ENCODE measurements at regions of chr14 and their contacts with region 1.

Region 1: DNA sequence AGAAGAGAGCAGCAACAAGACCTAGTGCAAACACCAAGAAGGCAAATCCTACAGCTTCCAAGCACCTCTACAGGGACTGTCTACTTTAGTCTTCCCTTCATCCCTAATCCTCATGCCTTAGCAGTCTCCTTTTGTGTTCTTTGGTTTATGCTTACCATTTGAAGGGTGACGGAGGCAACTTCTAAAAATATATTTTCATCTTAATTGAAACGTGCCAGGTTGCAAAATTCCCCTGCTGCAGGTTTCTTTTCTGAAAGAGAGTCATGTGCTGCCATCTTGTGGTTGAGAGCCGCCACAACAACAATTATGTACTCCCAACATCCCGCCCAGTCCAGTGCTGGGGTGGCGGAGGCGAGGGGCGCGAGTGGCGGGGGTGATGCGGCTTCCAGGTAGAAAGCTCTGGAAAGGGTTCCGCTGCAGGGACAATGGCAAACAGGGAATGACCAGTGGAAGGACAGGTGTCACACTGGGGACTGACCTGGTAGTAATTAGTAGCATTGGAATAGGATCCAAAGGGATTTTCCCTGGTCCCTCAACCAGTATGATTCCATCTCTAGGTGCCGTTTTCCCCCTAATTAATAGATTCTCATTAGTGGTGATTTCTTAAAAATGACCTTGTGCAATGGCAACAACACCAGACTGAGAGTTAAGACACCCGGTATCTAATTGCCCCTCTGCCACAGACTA is 80.3 kb upstream of the GNG2 start:
- DNase-seq: peak; percentile 34 to 74 (median 64)
- ATAC-seq: peak; percentile 84
- H3K4me3 ChIP-seq: no peak overlapping the region
- H3K4me3 Mint-ChIP-seq: peak overlapping the region; percentile 5 to 76 (median 53)
- H3K27ac ChIP-seq: no peak overlapping the region
- H3K27ac Mint-ChIP-seq: peak overlapping the region in 6 of 9 donors; percentile 35 to 89 (median 46)
- H3K4me1 ChIP-seq: peaks cover 5 to 15% of the 10 kb centered on the region in 2 donors
- H3K4me1 Mint-ChIP-seq: peaks cover 18 to 34% (median 26%) of the 10 kb centered on the region in 7 donors
- H3K27me3 ChIP-seq: no peaks in the 10 kb centered on the region
- H3K27me3 Mint-ChIP-seq: peaks cover 0 to 48% (median 5%) of the 10 kb centered on the region in 5 donors

Region 2: DNA sequence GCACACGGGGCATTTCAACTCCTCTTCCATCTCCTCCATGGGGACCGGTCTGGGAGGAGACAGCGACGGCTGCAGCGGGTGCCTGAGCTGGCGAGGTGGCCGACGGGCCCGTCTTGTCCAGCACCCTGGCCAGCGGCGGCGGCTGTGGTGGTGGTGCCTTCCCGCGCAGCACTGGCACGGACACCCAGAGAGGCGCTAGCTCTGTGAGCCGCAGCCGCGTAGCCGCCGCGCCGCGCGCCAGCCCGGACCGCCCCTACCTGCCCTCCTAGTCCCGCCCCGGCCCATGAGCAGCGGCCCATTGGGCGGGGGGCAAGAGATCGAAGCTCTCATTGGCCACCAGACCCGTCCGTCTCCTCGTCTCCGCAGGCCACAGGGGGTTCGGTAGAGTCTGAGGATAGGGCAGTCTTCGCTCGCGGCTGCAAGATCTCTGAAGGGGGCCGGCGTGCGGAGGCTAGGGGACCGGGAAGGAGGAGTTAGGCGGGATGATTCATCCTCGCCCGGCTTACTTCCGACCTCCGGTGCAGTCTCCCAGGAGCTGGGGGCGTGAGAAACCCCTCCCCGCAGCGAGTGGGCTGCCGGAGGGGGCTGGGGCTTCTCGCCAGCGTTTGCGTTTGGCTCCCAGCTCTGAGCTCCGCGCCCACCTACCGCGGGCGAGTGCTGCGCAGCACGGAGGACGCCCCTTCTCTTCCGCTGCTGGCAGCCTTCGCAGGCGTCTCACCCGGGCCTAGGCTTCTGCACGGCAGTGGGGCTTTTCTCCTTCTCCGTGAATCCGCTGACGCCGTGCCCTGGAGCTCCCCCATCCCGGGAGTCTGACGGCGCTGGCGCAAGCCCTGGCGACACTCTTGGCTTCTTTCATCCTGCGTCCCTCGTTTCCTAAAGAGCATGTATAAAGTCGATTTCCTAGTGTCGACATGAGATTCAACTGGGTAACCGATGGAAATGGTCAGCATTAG is 685.0 kb before region 1 on chr14 and contains the start of gene TRIM9:
- CTCF ChIA-PET with region 1: interaction called, 3 read pairs
- POLR2A ChIA-PET with region 1: interaction called, 3 read pairs
- intact Hi-C with region 1: loop called (anchors 5 to 10 kb)
- DNase-seq: peak; percentile 77 to 93 (median 91)
- ATAC-seq: peak; percentile 96
- H3K4me3 ChIP-seq: peak within 1 kb of the TSS; percentile 83
- H3K4me3 Mint-ChIP-seq: peak within 1 kb of the TSS; percentile 89 to 98 (median 95)
- H3K27ac ChIP-seq: peak within 1 kb of the TSS; percentile 58
- H3K27ac Mint-ChIP-seq: peak within 1 kb of the TSS; percentile 9 to 93 (median 87)
- H3K4me1 ChIP-seq: peaks cover 3 to 8% of the 10 kb centered on the region in 2 donors
- H3K4me1 Mint-ChIP-seq: peaks cover 4 to 18% (median 9%) of the 10 kb centered on the region in 7 donors
- H3K27me3 ChIP-seq: peaks cover 0 to 3% of the 10 kb centered on the region in 2 donors
- H3K27me3 Mint-ChIP-seq: peaks cover 12 to 70% (median 17%) of the 10 kb centered on the region in 5 donors
- total RNA-seq, gene TRIM9: 0.27 to 1.7 (median 0.39) TPM

Region 3: DNA sequence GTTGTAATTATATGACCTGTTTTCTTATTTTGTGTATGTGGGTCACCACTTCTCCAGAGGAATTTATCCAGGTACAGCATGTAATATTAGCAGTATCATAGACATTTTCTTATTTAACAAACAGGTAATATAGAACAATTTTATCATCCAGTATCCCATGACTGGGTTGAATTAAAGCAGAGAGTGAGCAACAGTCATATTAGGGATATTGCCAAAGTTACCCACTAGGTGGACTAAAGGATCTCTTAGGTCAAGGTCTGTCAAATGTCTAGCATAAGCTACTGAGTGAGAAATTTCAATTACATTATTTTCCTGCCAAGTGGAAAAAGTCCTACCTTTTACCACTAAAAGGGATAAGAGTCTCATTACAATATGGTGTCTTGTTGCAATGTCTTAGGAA is 623.1 kb before region 1 on chr14:
- CTCF ChIA-PET with region 1: no interaction called
- POLR2A ChIA-PET with region 1: no interaction called
- intact Hi-C with region 1: loop called (anchors 5 kb)
- DNase-seq: no peak
- ATAC-seq: no peak
- H3K4me3 ChIP-seq: no peak overlapping the region
- H3K4me3 Mint-ChIP-seq: no peak overlapping the region
- H3K27ac ChIP-seq: no peak overlapping the region
- H3K27ac Mint-ChIP-seq: no peak overlapping the region
- H3K4me1 ChIP-seq: no peaks in the 10 kb centered on the region
- H3K4me1 Mint-ChIP-seq: peaks cover 0 to 3% (median 0%) of the 10 kb centered on the region in 7 donors
- H3K27me3 ChIP-seq: no peaks in the 10 kb centered on the region
- H3K27me3 Mint-ChIP-seq: peaks cover 0 to 3% (median 0%) of the 10 kb centered on the region in 5 donors

Region 4: GRCh38 chr14:51283402-51284085 is 496.6 kb before region 1 on chr14:
- CTCF ChIA-PET with region 1: interaction called, 33 read pairs
- POLR2A ChIA-PET with region 1: no interaction called
- intact Hi-C with region 1: loop called (anchors 1 kb)
- DNase-seq: peak in 5 of 9 donors; percentile 25 to 47 (median 32)
- ATAC-seq: peak; percentile 73
- H3K4me3 ChIP-seq: no peak overlapping the region
- H3K4me3 Mint-ChIP-seq: no peak overlapping the region
- H3K27ac ChIP-seq: no peak overlapping the region
- H3K27ac Mint-ChIP-seq: no peak overlapping the region
- H3K4me1 ChIP-seq: no peaks in the 10 kb centered on the region
- H3K4me1 Mint-ChIP-seq: peaks cover 0 to 2% (median 0%) of the 10 kb centered on the region in 7 donors
- H3K27me3 ChIP-seq: no peaks in the 10 kb centered on the region
- H3K27me3 Mint-ChIP-seq: no peaks in the 10 kb centered on the region

Region 5: GRCh38 chr14:51369814-51370213 is 410.3 kb before region 1 on chr14:
- CTCF ChIA-PET with region 1: no interaction called
- POLR2A ChIA-PET with region 1: no interaction called
- intact Hi-C with region 1: loop called (anchors 1 to 2 kb)
- DNase-seq: peak in 4 of 9 donors; percentile 1 to 14 (median 8)
- ATAC-seq: no peak
- H3K4me3 ChIP-seq: no peak overlapping the region
- H3K4me3 Mint-ChIP-seq: no peak overlapping the region
- H3K27ac ChIP-seq: no peak overlapping the region
- H3K27ac Mint-ChIP-seq: no peak overlapping the region
- H3K4me1 ChIP-seq: no peaks in the 10 kb centered on the region
- H3K4me1 Mint-ChIP-seq: no peaks in the 10 kb centered on the region
- H3K27me3 ChIP-seq: no peaks in the 10 kb centered on the region
- H3K27me3 Mint-ChIP-seq: peaks cover 4 to 14% (median 9%) of the 10 kb centered on the region in 5 donors

Region 6: GRCh38 chr14:51554953-51555352 is 225.2 kb before region 1 on chr14:
- CTCF ChIA-PET with region 1: interaction called, 4 read pairs
- POLR2A ChIA-PET with region 1: no interaction called
- intact Hi-C with region 1: loop called (anchors 1 to 10 kb)
- DNase-seq: no peak
- ATAC-seq: no peak
- H3K4me3 ChIP-seq: no peak overlapping the region
- H3K4me3 Mint-ChIP-seq: no peak overlapping the region
- H3K27ac ChIP-seq: no peak overlapping the region
- H3K27ac Mint-ChIP-seq: no peak overlapping the region
- H3K4me1 ChIP-seq: no peaks in the 10 kb centered on the region
- H3K4me1 Mint-ChIP-seq: no peaks in the 10 kb centered on the region
- H3K27me3 ChIP-seq: no peaks in the 10 kb centered on the region
- H3K27me3 Mint-ChIP-seq: peaks cover 11 to 24% (median 12%) of the 10 kb centered on the region in 5 donors

Region 7: GRCh38 chr14:51979088-51979709 is 199.1 kb after region 1 on chr14:
- CTCF ChIA-PET with region 1: interaction called, 48 read pairs
- POLR2A ChIA-PET with region 1: no interaction called
- intact Hi-C with region 1: loop called (anchors 1 kb)
- DNase-seq: peak; percentile 53 to 80 (median 70)
- ATAC-seq: peak; percentile 91
- H3K4me3 ChIP-seq: no peak overlapping the region
- H3K4me3 Mint-ChIP-seq: no peak overlapping the region
- H3K27ac ChIP-seq: no peak overlapping the region
- H3K27ac Mint-ChIP-seq: peak overlapping the region in 3 of 9 donors; percentile 15 to 67 (median 20)
- H3K4me1 ChIP-seq: peaks cover 0 to 10% of the 10 kb centered on the region in 2 donors
- H3K4me1 Mint-ChIP-seq: peaks cover 0 to 18% (median 6%) of the 10 kb centered on the region in 7 donors
- H3K27me3 ChIP-seq: no peaks in the 10 kb centered on the region
- H3K27me3 Mint-ChIP-seq: peaks cover 0 to 5% (median 0%) of the 10 kb centered on the region in 5 donors

Region 8: GRCh38 chr14:52286661-52287649 is 506.8 kb after region 1 on chr14:
- CTCF ChIA-PET with region 1: no interaction called
- POLR2A ChIA-PET with region 1: no interaction called
- intact Hi-C with region 1: no loop called
- DNase-seq: peak in 5 of 9 donors; percentile 9 to 37 (median 24)
- ATAC-seq: peak; percentile 44
- H3K4me3 ChIP-seq: peak overlapping the region; percentile 4
- H3K4me3 Mint-ChIP-seq: peak overlapping the region; percentile 4 to 73 (median 60)
- H3K27ac ChIP-seq: no peak overlapping the region
- H3K27ac Mint-ChIP-seq: peak overlapping the region in 7 of 9 donors; percentile 3 to 91 (median 16)
- H3K4me1 ChIP-seq: peaks cover 21 to 22% of the 10 kb centered on the region in 2 donors
- H3K4me1 Mint-ChIP-seq: peaks cover 19 to 52% (median 27%) of the 10 kb centered on the region in 7 donors
- H3K27me3 ChIP-seq: no peaks in the 10 kb centered on the region
- H3K27me3 Mint-ChIP-seq: peaks cover 0 to 15% (median 0%) of the 10 kb centered on the region in 5 donors